Uterus (tissue), 4 donors: ENCODE measurements at regions of chr1 and their contacts with region 1.

Region 1: DNA sequence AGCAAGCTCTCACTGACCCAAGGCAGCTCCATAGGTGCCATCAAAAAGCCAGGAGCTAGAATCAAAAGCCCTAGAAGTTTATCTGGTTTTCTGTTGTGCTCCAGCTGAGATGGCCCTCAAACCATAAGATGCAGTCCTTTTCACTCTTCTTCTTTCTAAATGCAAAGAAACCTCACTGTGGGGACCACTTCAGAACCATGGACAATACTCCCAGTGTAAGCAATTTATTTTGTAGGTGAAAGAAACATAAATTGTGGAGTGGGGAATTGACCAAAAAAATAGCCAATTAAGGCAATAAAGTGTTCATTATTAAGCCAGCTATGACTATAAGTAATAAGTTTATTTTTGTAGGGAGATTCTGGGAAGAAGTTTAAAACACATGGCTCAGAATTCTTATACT is 1399.9 kb downstream of the PLA2G4A start:
- DNase-seq: no peak
- H3K4me3 ChIP-seq: no peak overlapping the region
- H3K27ac ChIP-seq: no peak overlapping the region
- H3K4me1 ChIP-seq: no peaks in the 10 kb centered on the region
- H3K27me3 ChIP-seq: no peaks in the 10 kb centered on the region
- CTCF ChIP-seq: no peak
- POLR2A ChIP-seq: no peak

Region 2: DNA sequence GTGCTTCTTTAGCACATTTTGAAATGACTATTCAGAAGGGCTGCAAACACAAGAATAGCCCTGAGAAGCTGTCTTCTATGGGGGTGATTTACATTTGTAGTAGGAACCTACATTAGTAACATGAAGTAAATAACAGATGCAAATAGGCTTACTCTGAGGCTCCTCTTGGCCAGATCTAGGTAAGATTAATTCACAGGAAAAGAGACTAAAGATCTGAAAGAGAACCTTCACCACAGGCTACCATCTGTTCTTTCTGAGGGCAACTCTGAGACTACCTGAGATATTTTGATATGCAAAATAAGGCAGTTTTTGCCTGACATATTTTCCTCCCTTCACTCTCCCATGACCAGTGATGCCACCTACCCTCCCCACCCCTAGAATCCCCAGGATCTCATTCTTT is 132.1 kb before region 1 on chr1:
- intact Hi-C with region 1: loop called (anchors 5 kb)
- DNase-seq: no peak
- H3K4me3 ChIP-seq: no peak overlapping the region
- H3K27ac ChIP-seq: no peak overlapping the region
- H3K4me1 ChIP-seq: no peaks in the 10 kb centered on the region
- H3K27me3 ChIP-seq: no peaks in the 10 kb centered on the region
- CTCF ChIP-seq: no peak
- POLR2A ChIP-seq: no peak

Region 3: GRCh38 chr1:188194916-188195315 is 33.7 kb before region 1 on chr1:
- intact Hi-C with region 1: no loop called
- DNase-seq: no peak
- H3K4me3 ChIP-seq: no peak overlapping the region
- H3K27ac ChIP-seq: no peak overlapping the region
- H3K4me1 ChIP-seq: no peaks in the 10 kb centered on the region
- H3K27me3 ChIP-seq: no peaks in the 10 kb centered on the region
- CTCF ChIP-seq: no peak
- POLR2A ChIP-seq: no peak

Region 4: GRCh38 chr1:188302746-188303145 is 74.1 kb after region 1 on chr1:
- intact Hi-C with region 1: no loop called
- DNase-seq: no peak
- H3K4me3 ChIP-seq: no peak overlapping the region
- H3K27ac ChIP-seq: no peak overlapping the region
- H3K4me1 ChIP-seq: no peaks in the 10 kb centered on the region
- H3K27me3 ChIP-seq: no peaks in the 10 kb centered on the region
- CTCF ChIP-seq: no peak
- POLR2A ChIP-seq: no peak